ENCODE measurements at regions of chr4 and their contacts with region 1.

Region 1: GRCh38 chr4:153573881-153574802 is 108.0 kb downstream of the TMEM131L start:
- DNase-seq: peak; percentile 77
- ATAC-seq: peak; percentile 87
- H3K4me3 Mint-ChIP-seq: no peak overlapping the region
- H3K27ac Mint-ChIP-seq: peak overlapping the region; percentile 39
- H3K4me1 Mint-ChIP-seq: peaks cover 78% of the 10 kb centered on the region
- H3K27me3 Mint-ChIP-seq: no peaks in the 10 kb centered on the region

Region 2: GRCh38 chr4:153142700-153143438 is 431.3 kb before region 1 on chr4:
- CTCF ChIA-PET with region 1: no interaction called
- POLR2A ChIA-PET with region 1: no interaction called
- intact Hi-C with region 1: loop called (anchors 1 to 2 kb)
- DNase-seq: peak; percentile 79
- ATAC-seq: peak; percentile 85
- H3K4me3 Mint-ChIP-seq: no peak overlapping the region
- H3K27ac Mint-ChIP-seq: no peak overlapping the region
- H3K4me1 Mint-ChIP-seq: peaks cover 8% of the 10 kb centered on the region
- H3K27me3 Mint-ChIP-seq: peaks cover 3% of the 10 kb centered on the region

Region 3: DNA sequence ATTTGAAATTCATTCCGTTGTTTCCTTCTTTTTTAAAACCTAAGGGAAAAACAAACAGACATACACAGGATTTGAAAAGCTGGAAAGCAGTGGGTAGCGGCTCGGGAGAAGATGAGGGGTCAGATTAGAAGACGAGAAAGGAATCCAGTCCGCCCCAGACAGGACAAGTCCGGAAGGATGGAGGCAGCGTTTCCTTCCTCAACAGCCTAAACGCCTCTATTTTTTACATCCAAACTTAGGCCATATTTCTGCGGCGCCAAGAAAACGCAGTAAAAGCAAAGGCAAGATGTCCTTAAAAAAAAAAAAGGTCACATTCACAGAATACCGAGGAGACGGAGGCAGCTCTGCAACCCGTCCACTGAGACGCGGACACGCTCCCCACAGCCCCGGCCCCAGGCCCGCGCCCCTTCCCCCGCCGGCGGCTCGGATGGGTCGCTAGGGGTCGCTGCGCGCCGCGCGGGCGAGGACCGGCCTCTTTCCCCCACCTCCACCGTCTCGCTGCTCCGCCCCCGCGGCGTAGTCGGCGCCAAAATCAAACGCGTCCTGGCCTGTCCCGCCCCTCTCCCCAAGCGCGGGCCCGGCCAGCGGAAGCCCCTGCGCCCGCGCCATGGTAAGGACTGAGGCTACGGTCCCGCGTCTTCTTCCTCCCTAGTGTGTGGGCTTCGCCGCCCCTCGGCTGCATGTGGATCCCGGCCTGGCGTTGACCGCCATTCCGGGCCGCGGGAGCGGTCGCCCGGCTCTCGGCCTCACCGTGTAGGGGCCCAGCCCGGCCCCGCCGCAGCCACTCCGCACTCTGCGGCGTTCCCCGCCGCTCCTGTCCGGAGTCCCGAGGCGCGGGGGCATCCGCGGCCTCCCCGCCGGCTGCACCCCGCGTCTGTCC is 229.8 kb before region 1 on chr4 and contains the start of gene MND1:
- CTCF ChIA-PET with region 1: interaction called, 26 read pairs
- POLR2A ChIA-PET with region 1: no interaction called
- intact Hi-C with region 1: loop called (anchors 1 kb)
- DNase-seq: peak; percentile 96
- ATAC-seq: peak; percentile 93
- H3K4me3 Mint-ChIP-seq: peak within 1 kb of the TSS; percentile 85
- H3K27ac Mint-ChIP-seq: peak within 1 kb of the TSS; percentile 90
- H3K4me1 Mint-ChIP-seq: peaks cover 36% of the 10 kb centered on the region
- H3K27me3 Mint-ChIP-seq: peaks cover 7% of the 10 kb centered on the region
- total RNA-seq, gene MND1: 34.1 to 41.9 TPM

Region 4: DNA sequence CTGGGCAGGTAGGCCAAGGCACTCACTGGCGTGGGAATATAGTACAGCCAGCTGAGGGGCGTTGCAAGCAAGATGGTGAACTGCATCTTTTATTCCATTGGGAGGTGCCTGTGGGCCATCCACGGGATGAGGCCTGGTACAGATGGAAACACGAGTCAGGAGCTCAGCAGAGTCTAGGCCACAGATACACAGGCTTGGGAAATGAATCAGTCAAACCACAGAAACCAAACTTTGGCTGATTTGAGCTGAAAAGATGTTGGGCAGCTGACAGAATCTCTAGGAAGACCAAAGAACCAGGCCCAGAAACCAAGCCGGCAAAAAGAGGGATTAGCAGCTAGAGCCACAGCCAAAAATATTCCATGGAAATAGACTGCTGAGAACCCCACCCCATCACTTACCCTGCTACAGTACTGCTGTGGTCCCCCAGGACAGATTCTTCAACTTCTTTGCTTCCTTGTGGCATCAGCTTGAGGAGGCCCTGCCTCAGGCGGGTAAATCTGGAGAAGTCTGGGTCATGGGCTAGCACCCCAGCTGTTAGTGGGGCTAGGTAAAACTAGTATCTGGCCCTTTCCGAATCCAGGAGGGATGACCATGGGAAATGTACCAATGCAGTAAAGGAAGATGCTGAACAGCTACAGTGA is 32.6 kb before region 1 on chr4:
- CTCF ChIA-PET with region 1: interaction called, 14 read pairs
- POLR2A ChIA-PET with region 1: no interaction called
- intact Hi-C with region 1: no loop called
- DNase-seq: peak; percentile 62
- ATAC-seq: peak; percentile 89
- H3K4me3 Mint-ChIP-seq: no peak overlapping the region
- H3K27ac Mint-ChIP-seq: peak overlapping the region; percentile 44
- H3K4me1 Mint-ChIP-seq: peaks cover 79% of the 10 kb centered on the region
- H3K27me3 Mint-ChIP-seq: no peaks in the 10 kb centered on the region

Region 5: GRCh38 chr4:153549401-153549800 is 24.7 kb before region 1 on chr4:
- CTCF ChIA-PET with region 1: interaction called, 5 read pairs
- POLR2A ChIA-PET with region 1: no interaction called
- intact Hi-C with region 1: loop called in 1 of 2 experiments (anchors 1 kb)
- DNase-seq: peak; percentile 46
- ATAC-seq: peak; percentile 92
- H3K4me3 Mint-ChIP-seq: no peak overlapping the region
- H3K27ac Mint-ChIP-seq: peak overlapping the region; percentile 47
- H3K4me1 Mint-ChIP-seq: peaks cover 50% of the 10 kb centered on the region
- H3K27me3 Mint-ChIP-seq: no peaks in the 10 kb centered on the region

Region 6: DNA sequence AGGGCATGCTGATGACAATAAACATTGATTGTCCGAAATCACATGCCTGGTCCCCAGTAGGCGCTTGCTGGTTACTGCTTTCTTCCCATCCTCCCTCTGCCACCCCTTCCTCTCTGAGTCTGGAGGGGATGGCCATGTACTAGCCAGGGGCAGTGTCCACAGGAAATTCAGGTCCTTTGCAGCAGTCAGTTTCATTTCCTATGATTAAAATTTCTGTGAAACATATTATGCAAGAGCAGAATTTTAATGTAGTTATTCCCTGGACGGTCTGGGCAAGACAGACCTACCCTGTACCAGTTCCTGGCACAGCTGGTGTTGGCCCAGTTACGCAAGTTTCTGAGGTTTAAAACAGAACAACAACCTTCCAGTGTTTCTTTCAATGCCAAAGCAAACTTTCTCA is 81.8 kb after region 1 on chr4:
- CTCF ChIA-PET with region 1: no interaction called
- POLR2A ChIA-PET with region 1: no interaction called
- intact Hi-C with region 1: no loop called
- DNase-seq: no peak
- ATAC-seq: no peak
- H3K4me3 Mint-ChIP-seq: no peak overlapping the region
- H3K27ac Mint-ChIP-seq: no peak overlapping the region
- H3K4me1 Mint-ChIP-seq: peaks cover 24% of the 10 kb centered on the region
- H3K27me3 Mint-ChIP-seq: no peaks in the 10 kb centered on the region

Region 7: GRCh38 chr4:154642373-154643009 is 1068.3 kb after region 1 on chr4:
- CTCF ChIA-PET with region 1: no interaction called
- POLR2A ChIA-PET with region 1: no interaction called
- intact Hi-C with region 1: no loop called
- DNase-seq: no peak
- ATAC-seq: no peak
- H3K4me3 Mint-ChIP-seq: no peak overlapping the region
- H3K27ac Mint-ChIP-seq: no peak overlapping the region
- H3K4me1 Mint-ChIP-seq: no peaks in the 10 kb centered on the region
- H3K27me3 Mint-ChIP-seq: peaks cover 15% of the 10 kb centered on the region

Measured in activated CD4-positive, alpha-beta T cell treated with anti-CD3 and anti-CD28 coated beads for 36 hours (primary cell).